ENCODE measurements at regions of chr19 and their contacts with region 1.

Region 1: DNA sequence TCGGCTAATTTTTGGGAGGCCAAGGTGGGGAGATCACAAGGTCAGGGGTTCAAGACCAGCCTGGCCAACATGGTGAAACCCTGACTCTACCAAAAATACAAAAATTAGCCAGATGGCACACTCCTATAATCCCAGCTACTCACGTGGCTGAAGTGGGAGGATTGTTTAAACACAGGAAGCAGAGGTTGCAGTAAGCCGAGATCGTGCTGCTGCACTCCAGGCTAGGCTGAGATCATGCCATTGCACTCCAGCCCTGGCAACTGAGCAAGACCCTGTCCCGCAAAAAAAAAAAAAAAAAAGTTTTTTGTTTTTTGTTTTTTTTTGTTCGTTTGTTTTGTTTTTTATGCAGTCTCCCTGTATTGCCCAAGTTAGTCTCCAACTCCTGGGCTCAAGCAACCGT is 21.2 kb downstream of the MAST1 start:
- DNase-seq: no peak
- ATAC-seq: no peak
- H3K4me3 ChIP-seq: no peak overlapping the region
- H3K4me3 Mint-ChIP-seq: no peak overlapping the region
- H3K27ac ChIP-seq: no peak overlapping the region
- H3K27ac Mint-ChIP-seq: no peak overlapping the region
- H3K4me1 ChIP-seq: no peaks in the 10 kb centered on the region
- H3K4me1 Mint-ChIP-seq: no peaks in the 10 kb centered on the region
- H3K27me3 ChIP-seq: no peaks in the 10 kb centered on the region
- H3K27me3 Mint-ChIP-seq: peaks cover 2% of the 10 kb centered on the region
- CTCF ChIP-seq: no peak

Region 2: DNA sequence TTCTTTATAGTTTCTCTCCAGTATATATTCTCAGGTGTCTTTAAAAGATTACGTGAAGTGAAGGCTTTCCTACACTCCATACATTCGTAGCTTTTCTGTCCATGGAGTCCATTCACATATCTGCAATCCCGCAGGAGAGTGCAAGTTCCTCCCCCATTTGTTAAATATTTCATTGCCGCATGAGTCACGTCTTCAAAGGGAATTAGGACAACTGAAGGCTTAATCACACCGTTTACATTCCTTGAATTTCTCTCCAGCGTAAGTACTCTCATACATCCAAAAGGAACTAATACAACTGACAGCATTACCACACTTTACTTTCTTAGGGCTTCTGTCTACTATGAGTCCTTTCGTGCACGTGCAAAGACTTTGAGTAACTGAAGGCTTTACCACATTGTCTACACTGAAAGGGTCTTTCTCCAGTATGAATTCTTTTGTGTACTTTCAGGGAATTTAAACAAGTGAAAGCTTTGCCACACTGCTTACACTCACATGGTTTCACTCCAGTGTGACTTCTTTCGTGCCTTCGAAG is 279.3 kb before region 1 on chr19:
- CTCF ChIA-PET with region 1: no interaction called
- POLR2A ChIA-PET with region 1: no interaction called
- intact Hi-C with region 1: no loop called
- DNase-seq: no peak
- ATAC-seq: no peak
- H3K4me3 ChIP-seq: no peak overlapping the region
- H3K4me3 Mint-ChIP-seq: no peak overlapping the region
- H3K27ac ChIP-seq: no peak overlapping the region
- H3K27ac Mint-ChIP-seq: no peak overlapping the region
- H3K4me1 ChIP-seq: no peaks in the 10 kb centered on the region
- H3K4me1 Mint-ChIP-seq: no peaks in the 10 kb centered on the region
- H3K27me3 ChIP-seq: no peaks in the 10 kb centered on the region
- H3K27me3 Mint-ChIP-seq: no peaks in the 10 kb centered on the region
- CTCF ChIP-seq: no peak

Region 3: GRCh38 chr19:12815088-12815487 is 44.5 kb before region 1 on chr19:
- CTCF ChIA-PET with region 1: no interaction called
- POLR2A ChIA-PET with region 1: no interaction called
- intact Hi-C with region 1: loop called in 1 of 2 experiments (anchors 5 kb)
- DNase-seq: no peak
- ATAC-seq: no peak
- H3K4me3 ChIP-seq: no peak overlapping the region
- H3K4me3 Mint-ChIP-seq: no peak overlapping the region
- H3K27ac ChIP-seq: no peak overlapping the region
- H3K27ac Mint-ChIP-seq: no peak overlapping the region
- H3K4me1 ChIP-seq: no peaks in the 10 kb centered on the region
- H3K4me1 Mint-ChIP-seq: no peaks in the 10 kb centered on the region
- H3K27me3 ChIP-seq: no peaks in the 10 kb centered on the region
- H3K27me3 Mint-ChIP-seq: no peaks in the 10 kb centered on the region
- CTCF ChIP-seq: no peak

Region 4: GRCh38 chr19:12933287-12934072 is 73.9 kb after region 1 on chr19 and contains the start of gene FARSA:
- CTCF ChIA-PET with region 1: no interaction called
- POLR2A ChIA-PET with region 1: no interaction called
- intact Hi-C with region 1: no loop called
- DNase-seq: peak; percentile 71 to 94 (median 87)
- ATAC-seq: peak; percentile 50
- H3K4me3 ChIP-seq: peak within 1 kb of the TSS; percentile 93
- H3K4me3 Mint-ChIP-seq: peak within 1 kb of the TSS; percentile 99
- H3K27ac ChIP-seq: peak within 1 kb of the TSS; percentile 66 to 68
- H3K27ac Mint-ChIP-seq: peak within 1 kb of the TSS; percentile 93
- H3K4me1 ChIP-seq: peaks cover 39% of the 10 kb centered on the region
- H3K4me1 Mint-ChIP-seq: peaks cover 41% of the 10 kb centered on the region
- H3K27me3 ChIP-seq: no peaks in the 10 kb centered on the region
- H3K27me3 Mint-ChIP-seq: no peaks in the 10 kb centered on the region
- CTCF ChIP-seq: no peak
- total RNA-seq, gene FARSA: 17.4 to 17.5 TPM

Measured in CD8-positive, alpha-beta T cell (primary cell).